Posterior vena cava (tissue), 2 donors: ENCODE measurements at regions of chr18 and their contacts with region 1.

Region 1: DNA sequence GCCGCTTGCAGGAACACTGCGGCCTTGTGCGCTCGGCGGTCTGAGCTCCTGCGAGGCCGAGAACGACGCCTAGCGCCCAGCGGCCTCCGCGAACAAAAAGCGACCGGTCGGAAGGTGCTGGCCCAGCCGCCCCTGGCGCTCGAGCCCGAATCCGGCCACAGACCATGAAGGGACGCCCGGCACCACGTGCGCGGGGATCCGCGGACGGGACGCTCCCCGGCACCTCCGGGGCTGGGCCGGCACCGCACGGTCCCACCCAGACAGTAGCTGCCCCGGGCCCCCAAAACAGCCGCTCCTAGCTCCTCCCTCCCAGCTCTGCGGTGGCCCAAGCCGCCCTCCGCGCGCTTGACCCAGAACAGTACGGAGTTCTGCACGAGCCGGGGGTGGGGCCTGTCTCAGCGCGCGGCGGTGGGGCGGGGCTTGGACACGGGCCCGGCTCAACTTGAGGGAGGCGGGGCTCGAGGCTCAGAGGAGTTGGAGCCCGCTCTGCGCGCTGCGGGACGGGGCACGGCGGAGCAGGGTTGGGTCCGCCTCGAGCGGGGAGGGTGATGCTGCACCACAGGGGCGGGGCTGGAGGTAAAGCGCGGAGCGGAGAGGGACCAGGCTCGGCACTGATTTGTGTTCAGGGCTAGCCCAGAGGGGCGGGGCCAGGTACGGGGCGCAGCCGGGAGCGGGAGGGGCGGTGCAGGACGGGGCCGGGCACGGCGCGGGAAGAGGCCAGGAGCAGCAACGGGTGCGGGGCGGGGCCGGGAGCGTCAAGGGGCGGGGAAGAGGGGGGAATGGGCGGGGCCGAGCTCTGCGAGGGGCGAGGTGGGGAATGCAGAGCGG is 538 bp upstream of the IMPA2 start:
- DNase-seq: peak; percentile 99

Region 2: DNA sequence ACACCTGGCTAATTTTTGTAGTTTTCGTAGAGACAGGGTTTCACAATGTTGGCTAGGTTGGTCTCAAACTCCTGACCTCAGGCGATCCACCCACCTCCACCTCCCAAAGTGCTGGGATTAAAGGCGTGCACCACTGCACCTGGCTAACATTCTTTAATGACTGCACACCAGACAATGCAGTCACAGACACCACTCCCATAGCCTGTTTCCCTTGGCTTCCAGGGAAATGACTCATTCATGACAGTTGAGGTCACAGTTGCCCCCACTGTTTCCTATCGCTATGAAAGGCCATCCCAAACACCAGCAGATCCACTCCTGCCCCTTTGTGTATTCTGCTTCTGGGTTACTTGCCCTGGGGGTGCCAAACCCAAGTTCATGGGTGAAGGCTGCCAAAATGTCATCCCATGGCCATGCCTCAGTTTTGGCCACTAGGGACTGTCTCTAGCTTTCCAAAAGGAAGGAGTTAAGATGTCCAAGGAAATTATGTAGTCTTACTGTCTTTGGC is 120.8 kb before region 1 on chr18:
- intact Hi-C with region 1: no loop called
- DNase-seq: no peak

Region 3: DNA sequence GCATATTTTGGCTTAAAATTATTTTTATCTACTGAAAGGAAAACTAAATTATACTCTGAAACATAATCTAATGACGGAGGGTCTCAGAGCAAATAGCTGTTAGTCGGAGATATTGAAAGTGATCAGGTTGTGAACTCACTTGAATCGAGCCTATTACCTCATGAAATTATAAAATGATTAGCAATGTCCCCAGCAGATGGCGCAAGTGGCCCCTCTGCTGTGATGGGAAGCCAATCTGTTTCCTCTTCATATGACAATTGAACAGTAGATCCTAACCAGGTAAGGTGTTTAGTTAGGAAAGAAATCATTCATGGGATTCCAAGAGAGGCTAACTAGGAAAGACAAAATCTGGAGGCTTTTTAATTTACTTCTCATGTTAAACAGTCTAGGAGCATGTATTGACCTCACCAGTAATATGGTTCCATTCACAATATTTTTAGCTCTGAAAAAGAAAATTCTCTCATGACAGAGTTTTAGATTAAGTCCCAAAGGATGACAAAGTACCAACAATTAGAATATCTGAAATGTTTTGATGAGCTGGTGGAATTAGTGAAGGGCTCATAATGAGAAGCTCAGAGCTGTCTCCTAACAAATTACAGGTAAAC is 42.8 kb before region 1 on chr18:
- intact Hi-C with region 1: loop called in 1 of 2 experiments (anchors 1 kb)
- DNase-seq: peak; percentile 89

Region 4: DNA sequence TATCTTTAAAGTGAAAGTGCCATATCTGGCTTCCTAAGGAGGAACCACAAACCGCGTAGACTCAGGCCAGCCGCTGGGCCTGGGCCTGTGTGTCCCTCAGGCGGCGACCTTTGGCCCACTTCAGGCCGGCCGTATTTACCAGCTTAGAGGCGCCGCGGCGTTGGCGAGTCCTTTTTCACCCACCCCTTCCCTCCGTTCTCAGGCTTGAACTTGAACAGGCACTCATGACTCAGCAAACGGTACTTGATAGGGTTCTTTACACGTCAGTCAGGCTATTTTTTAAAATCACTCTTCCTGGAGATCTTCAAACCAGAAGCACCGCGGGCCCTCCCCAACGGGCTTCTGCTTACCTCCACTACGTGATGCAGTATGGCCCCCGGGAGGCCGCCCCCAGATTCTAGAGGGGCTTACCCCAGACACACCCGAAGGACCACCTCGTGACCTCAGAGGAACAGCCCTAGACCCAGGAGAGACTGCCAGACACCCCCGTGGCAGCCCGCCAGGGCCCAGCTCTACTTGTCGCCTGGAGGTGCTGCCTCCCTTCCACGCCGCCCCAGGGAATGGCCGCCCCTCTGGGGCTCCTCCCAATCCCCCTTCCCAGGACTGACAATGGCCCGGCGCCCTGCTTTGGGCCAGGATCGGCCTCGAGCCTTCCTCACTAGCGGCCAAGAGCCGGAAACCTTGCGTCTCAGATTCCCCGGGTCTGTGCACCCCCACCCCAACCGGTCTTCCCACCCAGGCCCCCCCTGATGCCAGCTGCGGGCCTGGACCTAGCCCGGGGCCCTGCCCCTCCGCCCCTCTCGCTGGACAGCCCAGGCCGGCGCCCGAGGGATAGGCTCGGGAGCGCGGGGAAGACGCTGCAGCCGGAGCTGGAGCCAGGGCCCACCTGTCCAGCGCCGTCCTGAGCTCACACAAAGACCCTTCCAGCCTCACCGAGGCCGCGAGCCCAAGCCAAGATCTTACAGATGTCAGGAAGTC is 33.3 kb before region 1 on chr18:
- intact Hi-C with region 1: loop called in 1 of 2 experiments (anchors 2 kb)
- DNase-seq: peak; percentile 97

Region 5: GRCh38 chr18:11955239-11956029 is 25.3 kb before region 1 on chr18:
- intact Hi-C with region 1: loop called in 1 of 2 experiments (anchors 2 kb)
- DNase-seq: no peak

Region 6: DNA sequence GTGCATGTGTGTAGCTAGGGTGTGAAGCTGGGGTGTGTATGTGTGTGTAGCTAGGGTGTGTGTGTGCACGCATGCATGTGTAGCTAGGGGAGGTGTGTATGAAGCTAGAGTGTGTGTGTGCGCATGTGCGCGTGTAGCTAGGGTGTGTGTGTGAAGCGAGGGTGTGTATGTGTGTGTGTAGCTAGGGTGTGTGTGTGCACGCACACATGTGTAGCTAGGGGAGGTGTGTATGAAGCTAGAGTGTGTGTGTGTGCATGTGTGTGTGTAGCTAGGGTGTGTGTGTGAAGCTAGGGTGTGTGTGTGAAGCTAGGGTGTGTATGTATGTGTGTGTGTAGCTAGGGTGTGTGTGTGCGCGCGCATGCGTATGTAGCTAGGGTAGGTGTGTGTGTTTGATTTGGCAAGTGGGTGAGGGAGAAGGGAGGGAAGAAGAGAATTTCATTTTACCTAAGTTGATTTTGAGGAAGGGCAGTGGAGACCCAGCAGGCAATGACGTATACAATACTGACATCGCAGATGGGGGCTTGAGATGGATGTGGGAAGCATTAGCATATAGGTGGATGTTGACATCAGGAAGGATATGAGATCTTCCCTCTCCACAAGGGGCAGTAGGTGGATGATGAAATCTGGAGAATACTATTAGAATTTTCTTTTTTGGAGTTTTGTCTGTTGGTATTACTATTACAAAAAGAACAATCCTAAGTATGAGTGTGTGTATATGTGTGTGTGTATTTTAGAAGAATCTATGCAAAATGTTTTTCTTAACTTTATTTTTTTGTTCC is 497.7 kb after region 1 on chr18:
- intact Hi-C with region 1: no loop called
- DNase-seq: no peak